AG04449 (cell line): ENCODE measurements at regions of chr10 and their contacts with region 1.

Region 1: GRCh38 chr10:119263951-119264621 is 56.7 kb downstream of the GRK5 start:
- DNase-seq: no peak
- H3K4me3 ChIP-seq: no peak overlapping the region
- CTCF ChIP-seq: no peak

Region 2: GRCh38 chr10:119253433-119254174 is 10.5 kb before region 1 on chr10:
- CTCF ChIA-PET with region 1: interaction called, 10 read pairs
- POLR2A ChIA-PET with region 1: no interaction called
- DNase-seq: peak; percentile 67
- H3K4me3 ChIP-seq: no peak overlapping the region
- CTCF ChIP-seq: peak; percentile 22